ENCODE measurements at regions of chr2 and their contacts with region 1.

Region 1: GRCh38 chr2:147910990-147911473 is 66.2 kb downstream of the ACVR2A start:
- DNase-seq: no peak
- H3K4me3 ChIP-seq: no peak overlapping the region
- H3K27ac ChIP-seq: peak overlapping the region in 1 of 4 donors; percentile 32
- H3K4me1 ChIP-seq: peaks cover 0 to 30% (median 0%) of the 10 kb centered on the region in 3 donors
- H3K27me3 ChIP-seq: no peaks in the 10 kb centered on the region
- CTCF ChIP-seq: peak; percentile 70 to 85 (median 80)
- POLR2A ChIP-seq: no peak

Region 2: DNA sequence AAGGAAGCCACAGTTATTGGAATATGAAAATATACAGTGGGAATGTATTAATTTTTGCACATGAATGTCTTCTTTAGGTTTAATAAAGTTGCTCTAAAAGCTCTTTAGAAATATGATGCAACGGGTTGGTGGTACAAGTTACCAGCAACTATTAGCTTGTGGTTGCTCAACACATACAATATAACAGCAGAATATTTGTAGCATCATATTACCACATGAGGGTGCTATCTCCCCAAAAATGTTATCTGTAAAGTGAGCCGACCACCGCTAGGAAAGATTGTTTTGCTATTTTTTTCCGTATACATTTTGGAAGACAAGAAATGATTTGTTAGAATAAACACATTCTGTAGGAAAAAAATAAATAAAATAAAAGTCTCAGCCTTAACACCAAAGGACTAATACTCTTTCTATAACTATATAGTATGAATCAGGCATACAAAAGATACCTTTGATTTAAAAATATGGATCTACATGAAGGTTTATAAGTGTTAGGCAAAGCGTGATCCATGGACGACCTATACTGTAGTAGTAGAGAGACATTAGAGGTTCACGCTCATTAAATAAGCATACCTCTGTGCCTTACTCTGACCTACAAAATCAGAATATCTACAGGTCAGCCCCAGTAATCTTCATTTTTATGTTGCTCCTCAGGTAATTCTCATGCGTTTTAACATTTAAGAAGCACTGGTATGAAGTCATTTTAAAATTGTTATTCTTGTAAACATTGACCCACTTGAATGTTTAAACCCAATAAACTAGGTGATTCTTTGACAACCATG is 1176.8 kb before region 1 on chr2:
- intact Hi-C with region 1: loop called (anchors 10 kb)
- DNase-seq: no peak
- H3K4me3 ChIP-seq: no peak overlapping the region
- H3K27ac ChIP-seq: no peak overlapping the region
- H3K4me1 ChIP-seq: peaks cover 0 to 6% (median 0%) of the 10 kb centered on the region in 3 donors
- H3K27me3 ChIP-seq: no peaks in the 10 kb centered on the region
- CTCF ChIP-seq: peak; percentile 19 to 72 (median 56)
- POLR2A ChIP-seq: no peak

Region 3: DNA sequence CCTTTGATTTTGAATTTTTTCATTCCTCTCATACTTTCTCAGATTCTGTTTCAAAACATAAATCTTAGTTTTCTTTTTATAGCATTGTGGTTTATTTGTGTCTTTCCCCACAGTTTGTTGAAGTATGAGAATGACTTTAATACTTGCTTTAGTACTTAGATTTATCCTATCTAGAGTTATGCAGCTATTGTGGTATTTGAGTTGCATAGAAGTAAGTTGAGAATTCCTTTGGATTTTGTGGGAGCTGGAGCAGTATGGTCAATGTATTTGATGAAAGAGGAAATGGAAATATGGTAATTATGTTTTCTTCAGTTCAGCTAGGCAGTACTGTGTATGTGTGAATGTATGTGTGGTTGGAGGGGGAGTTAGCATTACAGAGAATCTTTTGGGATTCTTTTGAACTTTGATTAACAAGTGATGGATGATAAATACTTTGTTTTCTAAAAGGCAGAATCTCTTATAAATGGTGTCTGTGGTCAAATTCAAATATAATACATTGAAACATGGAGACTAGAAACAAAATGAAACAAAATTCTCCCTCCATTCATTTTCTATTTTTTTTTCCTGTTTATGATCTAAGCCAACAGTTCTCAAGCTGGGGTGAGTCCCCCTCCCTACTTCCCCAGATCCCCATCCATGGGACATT is 63.2 kb before region 1 on chr2:
- intact Hi-C with region 1: no loop called
- DNase-seq: no peak
- H3K4me3 ChIP-seq: no peak overlapping the region
- H3K27ac ChIP-seq: no peak overlapping the region
- H3K4me1 ChIP-seq: peaks cover 11 to 71% (median 12%) of the 10 kb centered on the region in 3 donors
- H3K27me3 ChIP-seq: no peaks in the 10 kb centered on the region
- CTCF ChIP-seq: no peak
- POLR2A ChIP-seq: no peak